H1 (cell line): ENCODE measurements at regions of chr1 and their contacts with region 1.

Region 1: DNA sequence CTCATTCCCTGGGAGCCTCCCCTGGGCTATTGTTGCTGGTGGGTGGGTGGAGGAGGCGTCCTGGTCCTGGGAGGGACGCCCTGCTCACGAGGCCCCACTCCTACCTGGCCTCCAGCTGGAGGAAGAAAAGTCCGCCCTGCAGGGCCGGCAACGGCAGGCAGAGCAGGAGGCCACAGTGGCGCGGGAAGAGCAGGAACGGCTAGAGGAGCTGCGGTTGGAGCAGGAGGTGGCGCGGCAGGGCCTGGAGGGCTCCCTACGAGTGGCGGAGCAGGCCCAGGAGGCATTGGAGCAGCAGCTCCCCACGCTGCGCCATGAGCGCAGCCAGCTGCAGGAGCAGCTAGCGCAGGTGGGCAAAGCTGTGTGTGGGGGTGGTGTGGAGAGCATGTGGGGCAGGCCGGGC is 24.9 kb downstream of the CROCC start:
- DNase-seq: no peak
- H3K4me3 ChIP-seq: no peak overlapping the region
- H3K27ac ChIP-seq: no peak overlapping the region
- H3K4me1 ChIP-seq: no peaks in the 10 kb centered on the region
- H3K27me3 ChIP-seq: no peaks in the 10 kb centered on the region
- CTCF ChIP-seq: no peak
- EP300 ChIP-seq: no peak
- POLR2A ChIP-seq: no peak
- RAD21 ChIP-seq: no peak

Region 2: DNA sequence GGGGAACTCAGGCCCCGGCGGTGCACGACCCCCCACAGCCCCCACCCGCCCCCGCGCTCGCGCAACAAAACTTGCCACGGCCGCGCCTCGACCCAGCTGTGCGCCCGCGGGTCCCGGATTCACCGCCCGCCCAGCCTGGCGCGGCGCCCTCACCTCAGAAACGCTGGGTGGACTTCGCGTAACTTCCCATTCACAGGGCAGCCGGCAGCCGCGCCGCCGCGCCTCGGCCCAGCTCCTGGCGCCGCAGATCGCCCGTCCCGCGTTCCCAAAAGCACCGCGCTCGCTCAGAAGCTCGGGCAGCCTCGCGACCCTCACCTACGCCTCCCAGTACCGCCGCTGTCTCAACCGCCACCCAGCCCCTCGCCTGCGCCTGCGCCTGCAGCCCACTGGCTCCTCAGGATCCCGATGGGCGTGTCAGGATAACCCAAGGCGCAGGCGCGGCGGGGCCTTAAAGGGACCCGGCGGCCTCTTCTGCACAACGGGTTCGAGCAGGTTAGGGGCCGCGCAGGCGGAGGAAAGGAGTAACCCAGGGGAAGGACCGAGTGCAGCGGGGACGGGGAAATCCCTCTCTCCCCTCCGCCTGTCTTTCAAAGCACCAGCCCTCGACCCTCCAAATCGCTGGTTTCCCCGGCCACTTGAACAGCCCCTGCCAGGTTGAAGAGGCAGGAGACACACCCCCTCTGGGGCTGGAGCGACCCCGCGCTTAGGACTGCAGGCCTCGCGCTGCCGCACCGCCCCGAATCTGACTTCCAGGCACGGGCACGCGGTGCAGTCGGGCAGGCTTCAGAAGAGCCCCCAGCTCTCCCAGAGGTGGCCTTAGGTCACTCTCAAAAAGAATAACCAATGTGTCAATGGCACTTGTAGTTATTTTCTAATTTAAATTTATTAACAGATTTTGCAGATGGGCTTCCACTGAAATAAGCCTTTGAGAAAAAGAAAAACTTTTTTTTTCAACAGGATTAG is 333.2 kb before region 1 on chr1 and contains the start of gene NBPF1:
- CTCF ChIA-PET with region 1: interaction called, 17 read pairs
- POLR2A ChIA-PET with region 1: interaction called, 8 read pairs
- DNase-seq: peak; percentile 99 to 100
- H3K4me3 ChIP-seq: peak within 1 kb of the TSS; percentile 49 to 88 (median 56)
- H3K27ac ChIP-seq: no peak within 1 kb of the TSS
- H3K4me1 ChIP-seq: peaks cover 0 to 10% (median 3%) of the 10 kb centered on the region in 4 experiments; a peak in 2 of 7 replicates
- H3K27me3 ChIP-seq: peaks cover 8 to 35% (median 26%) of the 10 kb centered on the region in 4 experiments
- CTCF ChIP-seq: no peak
- EP300 ChIP-seq: peak in 1 of 2 experiments; percentile 64; a peak in 2 of 3 replicates
- POLR2A ChIP-seq: peak in 1 of 2 experiments; percentile 77; a peak in 2 of 3 replicates
- RAD21 ChIP-seq: peak in 1 of 2 experiments; percentile 18; a peak in 3 of 4 replicates
- total RNA-seq, gene NBPF1: 19.3 and 19.4 TPM in 2 replicates

Region 3: DNA sequence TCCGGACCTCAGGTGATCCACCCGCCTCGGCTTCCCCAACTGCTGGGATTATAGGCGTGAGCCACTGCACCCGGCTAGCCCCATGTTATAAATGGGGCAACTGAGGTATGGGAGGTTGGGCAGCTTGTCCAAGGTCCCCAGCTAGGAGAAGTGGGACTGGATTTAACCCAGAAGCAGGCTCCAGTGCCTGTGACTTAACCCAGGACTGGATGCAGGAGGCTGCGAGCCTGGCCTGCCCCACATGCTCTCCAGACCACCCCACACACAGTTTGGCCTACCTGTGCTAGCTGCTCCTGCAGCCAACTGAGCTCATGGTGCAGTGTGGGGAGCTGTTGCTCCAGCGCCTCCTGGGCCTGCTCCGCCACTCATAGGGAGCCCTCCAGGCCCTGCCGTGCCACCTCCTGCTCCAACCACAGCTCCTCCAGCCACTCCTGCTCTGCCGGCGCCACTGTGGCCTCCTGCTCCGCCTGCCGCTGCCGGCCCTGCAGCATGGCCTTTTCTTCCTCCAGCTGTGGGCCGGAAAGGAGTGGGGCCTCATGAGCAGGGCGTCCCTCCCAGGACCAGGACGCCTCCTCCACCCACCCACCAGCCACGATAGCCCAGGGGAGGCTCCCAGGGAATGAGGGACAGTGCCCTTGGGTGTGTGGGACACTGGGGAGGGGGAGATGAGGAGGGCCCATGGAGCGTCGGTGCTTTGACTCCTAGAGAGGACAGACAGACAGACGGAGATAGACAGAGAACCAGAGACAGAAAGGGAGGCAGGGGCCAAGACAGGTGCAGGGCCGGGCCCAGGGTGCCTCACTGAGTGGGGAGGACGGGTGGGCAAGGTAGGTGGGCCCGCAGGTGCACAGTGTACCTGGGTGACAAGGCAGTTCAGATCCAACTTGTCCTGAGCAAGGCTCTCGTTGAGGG is 320.9 kb before region 1 on chr1:
- CTCF ChIA-PET with region 1: interaction called, 59 read pairs
- POLR2A ChIA-PET with region 1: interaction called, 4 read pairs
- DNase-seq: peak in 1 of 2 experiments; percentile 72
- H3K4me3 ChIP-seq: no peak overlapping the region
- H3K27ac ChIP-seq: no peak overlapping the region
- H3K4me1 ChIP-seq: peaks cover 0 to 2% (median 0%) of the 10 kb centered on the region in 4 experiments; a peak in 3 of 7 replicates
- H3K27me3 ChIP-seq: no peaks in the 10 kb centered on the region
- CTCF ChIP-seq: peak in 1 of 3 experiments; percentile 12; a peak in 1 of 4 replicates
- EP300 ChIP-seq: no peak
- POLR2A ChIP-seq: no peak
- RAD21 ChIP-seq: no peak

Region 4: GRCh38 chr1:16927711-16928485 is 18.7 kb before region 1 on chr1:
- CTCF ChIA-PET with region 1: interaction called, 22 read pairs
- POLR2A ChIA-PET with region 1: interaction called, 3 read pairs
- DNase-seq: no peak
- H3K4me3 ChIP-seq: no peak overlapping the region
- H3K27ac ChIP-seq: peak overlapping the region; percentile 25; the same call in 1 of the 2 replicates
- H3K4me1 ChIP-seq: peaks cover 0 to 17% (median 9%) of the 10 kb centered on the region in 4 experiments; a peak in 6 of 7 replicates
- H3K27me3 ChIP-seq: no peaks in the 10 kb centered on the region
- CTCF ChIP-seq: no peak
- EP300 ChIP-seq: no peak
- POLR2A ChIP-seq: no peak
- RAD21 ChIP-seq: no peak

Region 5: DNA sequence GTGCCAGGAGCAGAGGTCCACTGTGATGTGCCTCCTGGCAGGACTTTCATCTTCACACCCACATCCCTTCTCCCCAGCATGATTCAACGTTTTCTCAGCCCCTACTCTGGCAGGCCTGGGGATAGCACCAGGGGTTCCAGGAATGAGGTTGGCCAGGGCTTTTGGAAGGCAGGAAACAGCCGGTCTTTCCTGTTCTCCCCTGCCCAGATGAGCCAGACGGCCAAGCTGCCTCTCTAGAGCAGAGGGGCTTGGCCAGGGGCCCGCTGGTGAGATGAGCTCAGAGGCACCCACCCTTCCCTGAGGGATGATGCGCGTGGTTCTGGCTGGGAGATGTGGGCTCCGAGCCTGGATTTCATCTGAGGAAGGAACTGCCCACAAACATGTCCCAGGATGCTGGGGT is 38.1 kb after region 1 on chr1:
- CTCF ChIA-PET with region 1: interaction called, 21 read pairs
- POLR2A ChIA-PET with region 1: interaction called, 3 read pairs
- DNase-seq: peak in 1 of 2 experiments; percentile 39
- H3K4me3 ChIP-seq: no peak overlapping the region
- H3K27ac ChIP-seq: no peak overlapping the region
- H3K4me1 ChIP-seq: peaks cover 0 to 9% (median 4%) of the 10 kb centered on the region in 4 experiments; a peak in 5 of 7 replicates
- H3K27me3 ChIP-seq: peaks cover 0 to 3% (median 0%) of the 10 kb centered on the region in 4 experiments; a peak in 1 of 7 replicates
- CTCF ChIP-seq: no peak
- EP300 ChIP-seq: no peak
- POLR2A ChIP-seq: no peak
- RAD21 ChIP-seq: no peak